Natural killer cell (primary cell): ENCODE measurements at regions of chr1 and their contacts with region 1.

Region 1: DNA sequence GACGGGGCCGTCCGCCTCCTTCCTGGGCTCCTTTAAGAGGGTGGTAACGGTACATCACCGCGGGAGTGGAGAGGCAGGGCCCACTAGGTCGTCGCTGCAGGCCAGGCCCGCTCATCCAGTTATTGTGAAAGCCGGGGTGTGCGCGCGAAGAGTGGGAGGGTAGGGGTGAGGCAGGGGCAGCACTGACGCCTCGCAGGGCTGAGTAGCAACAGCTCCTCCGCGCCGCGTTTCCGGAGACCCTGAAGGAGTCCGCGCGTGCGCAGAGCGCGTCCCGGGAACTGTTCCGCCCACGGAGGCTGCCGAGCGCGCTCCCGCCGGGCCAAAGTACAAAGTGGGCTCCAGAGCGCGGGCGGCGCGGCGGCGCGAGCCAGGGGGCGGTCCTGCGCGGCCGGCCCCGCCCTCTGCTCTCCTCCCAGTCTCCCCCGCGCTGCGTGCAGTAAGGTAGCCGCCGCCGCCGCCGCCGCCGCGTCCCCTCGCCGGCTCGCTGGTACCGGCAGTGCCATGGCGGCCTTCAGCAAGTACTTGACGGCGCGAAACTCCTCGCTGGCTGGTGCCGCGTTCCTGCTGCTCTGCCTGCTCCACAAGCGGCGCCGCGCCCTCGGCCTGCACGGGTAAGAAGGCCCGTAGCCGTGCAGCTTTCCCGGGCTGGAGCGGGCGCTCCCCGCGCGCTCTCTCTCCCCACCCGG is at the start of gene ABCD3:
- DNase-seq: peak; percentile 97 to 99
- ATAC-seq: peak; percentile 92 to 98 (median 94)
- H3K4me3 ChIP-seq: peak within 1 kb of the TSS; percentile 94
- H3K4me3 Mint-ChIP-seq: no peak within 1 kb of the TSS
- H3K27ac ChIP-seq: peak within 1 kb of the TSS; percentile 80
- H3K27ac Mint-ChIP-seq: no peak within 1 kb of the TSS
- H3K4me1 ChIP-seq: peaks cover 9% of the 10 kb centered on the region
- H3K4me1 Mint-ChIP-seq: peaks cover 26 to 40% of the 10 kb centered on the region in 2 donors
- H3K27me3 ChIP-seq: no peaks in the 10 kb centered on the region
- H3K27me3 Mint-ChIP-seq: peaks cover 8 to 11% of the 10 kb centered on the region in 2 donors
- CTCF ChIP-seq: no peak
- total RNA-seq, gene ABCD3: 22.3 to 29.5 (median 27.6) TPM

Region 2: GRCh38 chr1:93749894-93750301 is 668.2 kb before region 1 on chr1:
- intact Hi-C with region 1: loop called (anchors 10 kb)
- DNase-seq: peak in 1 of 2 donors; percentile 13
- ATAC-seq: no peak
- H3K4me3 ChIP-seq: no peak overlapping the region
- H3K4me3 Mint-ChIP-seq: peak overlapping the region; percentile 79
- H3K27ac ChIP-seq: peak overlapping the region; percentile 82
- H3K27ac Mint-ChIP-seq: peak overlapping the region; percentile 97
- H3K4me1 ChIP-seq: peaks cover 29% of the 10 kb centered on the region
- H3K4me1 Mint-ChIP-seq: peaks cover 45 to 46% of the 10 kb centered on the region in 2 donors
- H3K27me3 ChIP-seq: no peaks in the 10 kb centered on the region
- H3K27me3 Mint-ChIP-seq: peaks cover 0 to 3% of the 10 kb centered on the region in 2 donors
- CTCF ChIP-seq: no peak

Region 3: DNA sequence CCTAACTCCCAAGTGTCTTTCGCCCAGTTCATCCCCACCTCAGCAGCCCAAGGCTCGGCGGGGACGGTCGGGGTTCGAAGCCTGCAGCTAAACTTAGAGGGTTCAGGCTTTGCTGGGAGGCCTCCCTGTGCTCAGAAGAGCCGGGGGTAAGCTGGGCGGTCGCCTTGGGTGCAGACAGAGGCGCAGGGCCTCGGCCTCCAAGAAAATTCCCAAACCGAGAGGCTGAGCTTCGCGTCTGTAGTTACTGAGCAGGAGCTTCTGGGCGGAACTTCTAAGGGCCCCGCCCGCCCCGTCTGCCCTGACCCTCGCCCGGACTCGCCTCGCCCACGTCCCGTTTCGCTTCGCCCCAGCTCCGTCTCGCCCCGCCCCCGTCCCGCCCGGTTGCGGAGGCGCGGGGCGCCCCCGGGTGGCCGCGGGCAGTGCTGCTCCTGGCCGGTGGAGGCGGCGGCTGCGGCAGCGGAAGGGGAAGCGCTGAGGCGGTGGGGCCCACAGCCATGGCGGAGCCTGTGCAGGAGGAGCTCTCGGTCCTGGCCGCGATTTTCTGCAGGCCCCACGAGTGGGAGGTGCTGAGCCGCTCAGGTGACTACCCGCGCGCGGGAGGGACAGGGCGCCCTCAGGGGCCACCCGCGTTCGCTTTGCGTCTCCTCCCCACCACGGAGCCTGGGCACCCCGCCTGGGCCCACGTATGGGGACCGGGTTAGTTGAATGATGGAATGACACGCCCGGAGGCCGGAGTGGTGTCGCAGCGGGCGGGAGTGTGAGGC is 815.8 kb after region 1 on chr1 and contains the start of gene RWDD3:
- intact Hi-C with region 1: loop called (anchors 5 kb)
- DNase-seq: peak; percentile 92 to 95
- ATAC-seq: peak; percentile 94 to 98 (median 94)
- H3K4me3 ChIP-seq: peak within 1 kb of the TSS; percentile 90
- H3K4me3 Mint-ChIP-seq: peak within 1 kb of the TSS; percentile 91
- H3K27ac ChIP-seq: peak within 1 kb of the TSS; percentile 74
- H3K27ac Mint-ChIP-seq: peak within 1 kb of the TSS; percentile 76 to 83
- H3K4me1 ChIP-seq: peaks cover 13% of the 10 kb centered on the region
- H3K4me1 Mint-ChIP-seq: peaks cover 19 to 31% of the 10 kb centered on the region in 2 donors
- H3K27me3 ChIP-seq: peaks cover 11% of the 10 kb centered on the region
- H3K27me3 Mint-ChIP-seq: peaks cover 19 to 24% of the 10 kb centered on the region in 2 donors
- CTCF ChIP-seq: peak; percentile 75
- total RNA-seq, gene RWDD3: 8.8 to 15.3 (median 15.2) TPM